Posterior vena cava (tissue), 2 donors: ENCODE measurements at regions of chr1 and their contacts with region 1.

Region 1: GRCh38 chr1:32205401-32206370 is at the start of gene IQCC:
- DNase-seq: peak; percentile 96
- total RNA-seq, gene IQCC: 0.33 to 1.1 TPM

Region 2: DNA sequence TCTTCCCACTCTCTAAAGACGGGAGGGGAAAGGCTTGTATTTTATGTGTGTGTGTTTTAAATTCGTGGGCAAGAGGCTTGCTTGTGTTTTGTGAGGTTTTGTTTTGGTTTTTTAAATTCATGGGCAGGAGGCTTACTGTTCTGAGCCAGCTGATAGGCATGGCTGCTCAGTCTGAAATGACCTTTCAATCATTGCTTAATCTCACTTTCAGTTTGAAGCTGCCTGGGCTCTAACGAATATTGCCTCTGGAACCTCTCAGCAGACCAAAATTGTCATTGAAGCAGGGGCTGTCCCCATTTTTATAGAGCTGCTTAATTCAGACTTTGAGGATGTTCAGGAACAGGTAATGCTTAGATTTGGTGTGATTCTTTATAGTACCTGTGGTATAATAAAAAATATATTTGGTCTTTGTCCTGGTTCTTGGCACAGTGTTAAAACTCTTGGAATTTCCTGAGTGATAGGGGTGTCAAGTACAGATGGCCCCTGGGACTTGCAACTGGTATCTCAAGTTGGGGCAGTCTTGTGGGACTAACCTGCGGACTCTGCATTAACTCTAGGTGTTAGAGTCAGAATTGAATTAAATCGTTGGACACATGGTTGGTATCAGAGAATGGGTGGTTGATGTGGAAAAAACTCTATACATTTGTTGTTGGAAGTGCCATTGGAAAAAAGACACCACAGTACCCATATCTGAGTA is 46.3 kb before region 1 on chr1:
- intact Hi-C with region 1: no loop called
- DNase-seq: no peak

Region 3: GRCh38 chr1:33606272-33606671 is 1400.6 kb after region 1 on chr1:
- intact Hi-C with region 1: loop called in 1 of 2 experiments (anchors 5 kb)
- DNase-seq: no peak